ENCODE measurements at regions of chr1 and their contacts with region 1.

Region 1: DNA sequence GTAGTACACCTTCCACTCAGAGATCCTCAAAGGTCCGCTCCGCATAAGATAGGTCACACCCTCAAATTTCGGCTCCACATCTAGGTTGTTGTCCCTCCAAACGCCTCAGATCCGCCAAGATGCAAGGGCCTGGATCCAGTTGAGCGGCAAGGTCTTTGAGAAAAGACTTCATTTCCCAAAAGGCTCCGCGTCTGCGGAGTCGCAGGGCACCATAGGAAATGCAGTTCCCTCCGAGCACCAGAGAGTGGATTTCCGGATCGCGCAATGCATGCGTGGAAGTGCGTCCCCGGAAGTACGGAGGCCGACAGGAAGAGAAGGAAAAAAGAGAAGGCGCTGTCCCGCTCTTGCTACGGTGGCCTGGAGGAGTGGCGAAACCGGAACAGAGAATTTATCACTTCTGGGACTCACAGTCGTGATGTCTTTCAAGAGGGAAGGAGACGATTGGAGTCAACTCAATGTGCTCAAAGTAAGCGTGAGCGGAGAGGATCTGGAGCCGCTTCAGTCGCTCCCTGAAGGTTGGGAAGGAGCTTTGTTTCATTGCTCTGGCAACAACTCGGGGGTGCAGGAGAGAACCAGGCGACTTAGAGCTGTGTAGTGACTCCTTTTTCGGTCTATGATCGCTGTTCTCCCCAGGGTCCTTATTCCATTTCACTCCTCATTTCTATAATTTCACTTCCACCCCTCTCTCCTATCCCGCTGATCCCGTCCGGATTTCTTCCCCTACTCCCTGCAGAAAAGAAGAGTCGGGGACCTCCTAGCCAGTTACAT is at the starts of genes LYSMD1 and SCNM1:
- DNase-seq: peak; percentile 93
- H3K4me3 ChIP-seq: peak within 1 kb of the TSS; percentile 80
- H3K27me3 ChIP-seq: no peaks in the 10 kb centered on the region
- CTCF ChIP-seq: no peak
- polyA plus RNA-seq, gene LYSMD1: 8.5 and 10.2 TPM in 2 replicates
- polyA plus RNA-seq, gene SCNM1: 27.4 and 29.7 TPM in 2 replicates

Region 2: GRCh38 chr1:151281969-151282882 is 116.3 kb after region 1 on chr1 and contains the start of gene ZNF687:
- CTCF ChIA-PET with region 1: interaction called, 3 read pairs
- POLR2A ChIA-PET with region 1: interaction called, 11 read pairs
- DNase-seq: peak; percentile 99
- H3K4me3 ChIP-seq: peak within 1 kb of the TSS; percentile 92
- H3K27me3 ChIP-seq: no peaks in the 10 kb centered on the region
- CTCF ChIP-seq: 0 out of 2 replicates have a peak, but pooled peaks have one; percentile 3
- polyA plus RNA-seq, gene ZNF687: 12.5 and 19.8 TPM in 2 replicates

Region 3: GRCh38 chr1:151334822-151335221 is 168.9 kb after region 1 on chr1:
- CTCF ChIA-PET with region 1: no interaction called
- POLR2A ChIA-PET with region 1: no interaction called
- DNase-seq: no peak
- H3K4me3 ChIP-seq: no peak overlapping the region
- H3K27me3 ChIP-seq: no peaks in the 10 kb centered on the region
- CTCF ChIP-seq: no peak